SK-N-SH (cell line): ENCODE measurements at regions of chr5 and their contacts with region 1.

Region 1: DNA sequence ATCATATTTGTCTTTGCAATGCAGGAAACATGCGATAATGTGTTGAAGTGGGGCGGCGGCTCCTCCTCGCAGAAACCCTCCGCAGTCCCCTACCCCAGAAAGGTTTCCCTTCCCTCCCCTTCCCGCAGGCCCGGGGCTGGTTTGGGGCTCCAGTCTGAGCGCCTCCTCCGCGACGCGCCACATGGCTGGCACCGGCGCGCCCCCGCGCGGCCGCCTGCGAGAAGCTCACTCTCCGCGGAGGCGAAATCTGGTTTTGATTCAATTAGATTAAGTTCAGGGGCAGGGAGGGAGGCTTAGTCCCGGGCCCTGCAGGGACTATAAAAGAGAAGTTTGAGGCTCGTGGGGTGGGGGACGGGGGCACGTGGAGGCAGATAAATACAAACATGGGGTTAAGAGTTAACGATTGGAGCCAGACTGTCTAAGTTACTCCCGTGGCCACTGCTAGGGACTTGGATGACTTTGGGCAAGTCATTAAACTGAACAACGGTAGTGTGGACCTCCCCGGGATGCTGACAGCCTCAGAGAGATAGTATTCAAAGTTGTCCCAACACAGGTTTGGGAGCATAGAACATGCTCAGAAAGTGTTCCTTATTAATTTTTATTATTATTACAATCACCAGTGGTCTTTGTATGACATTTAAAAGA is 69.4 kb downstream of the MSX2 start:
- DNase-seq: peak; percentile 90
- H3K4me3 ChIP-seq: no peak overlapping the region; a peak in 1 of 4 replicates
- H3K27ac ChIP-seq: no peak overlapping the region; a peak in 1 of 4 replicates
- H3K4me1 ChIP-seq: peaks cover 0 to 14% of the 10 kb centered on the region in 2 experiments; a peak in 1 of 4 replicates
- H3K27me3 ChIP-seq: no peaks in the 10 kb centered on the region; the same call in none of the 2 replicates
- CTCF ChIP-seq: peak; percentile 93
- EP300 ChIP-seq: no peak
- RAD21 ChIP-seq: peak; percentile 80

Region 2: GRCh38 chr5:174751154-174752000 is 42.4 kb before region 1 on chr5:
- CTCF ChIA-PET with region 1: interaction called, 13 read pairs
- POLR2A ChIA-PET with region 1: interaction called, 4 read pairs
- DNase-seq: peak; percentile 87
- H3K4me3 ChIP-seq: peak overlapping the region; percentile 53 to 71
- H3K27ac ChIP-seq: peak overlapping the region in 1 of 2 experiments; percentile 64; a peak in 2 of 4 replicates
- H3K4me1 ChIP-seq: no peaks in the 10 kb centered on the region; a peak in 1 of 4 replicates
- H3K27me3 ChIP-seq: peaks cover 5% of the 10 kb centered on the region; the same call in 1 of the 2 replicates
- CTCF ChIP-seq: no peak
- EP300 ChIP-seq: no peak
- RAD21 ChIP-seq: no peak

Region 3: DNA sequence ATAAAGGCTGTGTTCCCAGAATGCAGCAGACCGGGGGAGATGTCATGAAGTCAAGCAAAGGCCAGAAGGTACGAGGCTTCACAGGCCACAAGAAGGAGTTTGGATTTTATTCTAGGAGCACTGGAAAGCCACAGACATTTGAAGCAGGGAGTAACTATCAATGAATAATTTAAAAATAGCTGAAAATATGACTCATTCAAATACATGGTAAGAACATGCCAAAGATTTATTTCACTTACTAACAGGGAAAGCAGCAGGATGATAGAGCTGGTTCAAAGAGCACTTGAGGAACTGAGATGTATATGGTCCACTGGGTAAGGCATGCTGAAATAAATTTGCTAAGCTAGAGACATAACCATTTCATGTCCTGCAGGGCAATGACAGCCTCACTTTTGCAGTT is 16.2 kb before region 1 on chr5:
- CTCF ChIA-PET with region 1: interaction called, 10 read pairs
- POLR2A ChIA-PET with region 1: no interaction called
- DNase-seq: no peak
- H3K4me3 ChIP-seq: no peak overlapping the region
- H3K27ac ChIP-seq: no peak overlapping the region
- H3K4me1 ChIP-seq: no peaks in the 10 kb centered on the region
- H3K27me3 ChIP-seq: no peaks in the 10 kb centered on the region; the same call in 1 of the 2 replicates
- CTCF ChIP-seq: no peak
- EP300 ChIP-seq: no peak
- RAD21 ChIP-seq: no peak

Region 4: DNA sequence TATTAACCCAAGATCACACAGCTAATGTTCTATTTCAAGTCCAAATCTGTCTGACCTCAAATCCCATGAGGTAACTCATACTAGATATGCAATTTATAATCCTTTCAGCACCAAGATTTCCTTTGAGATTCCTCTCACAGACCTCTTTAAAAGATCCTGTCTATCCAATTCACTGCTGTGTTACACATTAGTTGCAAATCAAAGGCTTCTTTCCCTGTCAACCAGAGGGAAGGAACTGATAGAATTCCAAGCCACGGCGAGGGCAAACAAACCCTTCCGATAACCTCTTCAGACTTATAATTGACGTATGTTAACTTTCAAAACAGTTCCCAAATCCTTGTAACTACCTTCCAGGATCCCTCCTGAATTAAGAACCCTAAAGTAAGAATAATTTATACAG is 481.3 kb after region 1 on chr5:
- CTCF ChIA-PET with region 1: no interaction called
- POLR2A ChIA-PET with region 1: no interaction called
- DNase-seq: no peak
- H3K4me3 ChIP-seq: no peak overlapping the region
- H3K27ac ChIP-seq: no peak overlapping the region
- H3K4me1 ChIP-seq: no peaks in the 10 kb centered on the region
- H3K27me3 ChIP-seq: no peaks in the 10 kb centered on the region
- CTCF ChIP-seq: no peak
- EP300 ChIP-seq: no peak
- RAD21 ChIP-seq: no peak